ENCODE measurements at regions of chr5 and their contacts with region 1.

Region 1: DNA sequence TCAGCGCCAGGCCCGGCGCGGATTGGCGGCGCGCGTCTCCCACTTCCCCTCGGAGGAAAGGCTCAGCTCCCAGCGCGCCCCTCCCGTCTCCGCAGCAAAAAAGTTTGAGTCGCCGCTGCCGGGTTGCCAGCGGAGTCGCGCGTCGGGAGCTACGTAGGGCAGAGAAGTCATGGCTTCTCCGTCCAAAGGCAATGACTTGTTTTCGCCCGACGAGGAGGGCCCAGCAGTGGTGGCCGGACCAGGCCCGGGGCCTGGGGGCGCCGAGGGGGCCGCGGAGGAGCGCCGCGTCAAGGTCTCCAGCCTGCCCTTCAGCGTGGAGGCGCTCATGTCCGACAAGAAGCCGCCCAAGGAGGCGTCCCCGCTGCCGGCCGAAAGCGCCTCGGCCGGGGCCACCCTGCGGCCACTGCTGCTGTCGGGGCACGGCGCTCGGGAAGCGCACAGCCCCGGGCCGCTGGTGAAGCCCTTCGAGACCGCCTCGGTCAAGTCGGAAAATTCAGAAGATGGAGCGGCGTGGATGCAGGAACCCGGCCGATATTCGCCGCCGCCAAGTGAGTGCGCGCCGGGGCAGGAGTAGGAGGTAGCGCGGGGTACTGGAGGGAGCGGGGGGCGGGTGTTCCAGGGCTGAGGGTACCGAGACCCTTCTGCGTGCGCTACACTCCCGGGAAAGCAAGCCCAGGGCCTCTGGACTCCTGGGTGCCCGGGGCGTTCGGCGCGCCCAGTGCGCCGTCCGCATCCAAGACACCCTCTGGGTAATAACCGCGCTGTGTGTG is at the start of gene MSX2:
- DNase-seq: peak; percentile 91
- ATAC-seq: peak; percentile 75
- H3K4me3 Mint-ChIP-seq: peak within 1 kb of the TSS; percentile 85
- H3K27ac Mint-ChIP-seq: no peak within 1 kb of the TSS
- H3K4me1 Mint-ChIP-seq: peaks cover 72% of the 10 kb centered on the region
- H3K27me3 Mint-ChIP-seq: peaks cover 99% of the 10 kb centered on the region
- CTCF ChIP-seq: no peak
- total RNA-seq, gene MSX2: 0.73 to 0.94 TPM (median 0.83 TPM) in 3 replicates

Region 2: GRCh38 chr5:174424219-174425053 is 300.2 kb before region 1 on chr5:
- CTCF ChIA-PET with region 1: interaction called, 26 read pairs
- POLR2A ChIA-PET with region 1: no interaction called
- DNase-seq: no peak
- ATAC-seq: no peak
- H3K4me3 Mint-ChIP-seq: no peak overlapping the region
- H3K27ac Mint-ChIP-seq: no peak overlapping the region
- H3K4me1 Mint-ChIP-seq: peaks cover 10% of the 10 kb centered on the region
- H3K27me3 Mint-ChIP-seq: peaks cover 6% of the 10 kb centered on the region; the same call in 1 of the 2 replicates
- CTCF ChIP-seq: no peak

Region 3: GRCh38 chr5:174735498-174736330 is 11.0 kb after region 1 on chr5:
- CTCF ChIA-PET with region 1: interaction called, 11 read pairs
- POLR2A ChIA-PET with region 1: interaction called, 5 read pairs
- DNase-seq: peak; percentile 72
- ATAC-seq: peak; percentile 53
- H3K4me3 Mint-ChIP-seq: peak overlapping the region; percentile 74
- H3K27ac Mint-ChIP-seq: no peak overlapping the region
- H3K4me1 Mint-ChIP-seq: peaks cover 55% of the 10 kb centered on the region
- H3K27me3 Mint-ChIP-seq: peaks cover 84% of the 10 kb centered on the region
- CTCF ChIP-seq: 0 out of 2 replicates have a peak, but pooled peaks have one; percentile 32